H1 (cell line): ENCODE measurements at regions of chr1 and their contacts with region 1.

Region 1: DNA sequence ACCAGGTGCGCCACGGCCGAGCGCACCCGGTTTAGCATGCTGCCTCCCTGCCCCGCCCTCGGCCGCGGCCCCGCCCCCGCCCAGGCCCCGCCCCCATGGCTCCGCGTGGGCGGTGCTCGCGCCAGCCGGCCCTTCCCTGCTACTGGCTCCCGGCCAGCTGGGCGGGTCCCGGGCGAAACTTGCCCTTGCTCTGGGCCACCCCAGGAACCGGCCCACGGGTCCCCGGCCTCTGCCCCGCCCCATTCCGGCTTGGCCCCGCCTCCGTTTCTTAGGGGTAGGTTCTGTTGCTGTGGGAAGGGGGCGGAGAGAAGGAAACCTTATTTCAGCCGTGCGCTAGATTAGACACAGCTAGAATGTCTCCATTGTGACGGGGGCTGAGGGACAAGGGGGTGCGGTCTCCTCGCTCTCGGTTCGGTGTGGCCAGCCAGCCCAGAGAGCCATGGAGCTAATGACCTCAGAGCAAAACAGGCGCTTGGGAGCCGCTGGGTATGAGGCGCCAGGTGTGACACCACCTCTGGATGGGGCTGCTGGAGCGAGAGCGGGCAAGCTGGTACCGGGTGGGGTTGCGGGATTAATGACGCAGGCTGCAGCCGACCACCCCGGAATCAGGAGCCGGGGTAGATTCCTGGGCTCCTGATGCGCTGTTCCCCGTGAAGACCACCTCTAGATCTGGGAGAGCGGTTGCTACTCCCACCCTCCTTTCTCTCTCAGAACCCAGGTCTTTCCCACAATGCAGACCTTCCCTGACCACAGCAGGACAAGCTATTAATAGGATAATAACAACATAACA is at the start of gene PPM1J:
- DNase-seq: peak; percentile 85 to 100
- H3K4me3 ChIP-seq: peak within 1 kb of the TSS; percentile 60 to 81 (median 73)
- H3K27ac ChIP-seq: no peak within 1 kb of the TSS
- H3K4me1 ChIP-seq: peaks cover 0 to 20% (median 13%) of the 10 kb centered on the region in 4 experiments; a peak in 6 of 7 replicates
- H3K27me3 ChIP-seq: peaks cover 0 to 29% (median 16%) of the 10 kb centered on the region in 4 experiments; a peak in 5 of 7 replicates
- CTCF ChIP-seq: no peak
- EP300 ChIP-seq: no peak
- POLR2A ChIP-seq: no peak
- RAD21 ChIP-seq: no peak; a peak in 1 of 4 replicates
- total RNA-seq, gene PPM1J: 17.5 and 19.4 TPM in 2 replicates

Region 2: GRCh38 chr1:112546076-112546475 is 169.4 kb before region 1 on chr1:
- CTCF ChIA-PET with region 1: no interaction called
- POLR2A ChIA-PET with region 1: no interaction called
- DNase-seq: no peak
- H3K4me3 ChIP-seq: no peak overlapping the region
- H3K27ac ChIP-seq: no peak overlapping the region
- H3K4me1 ChIP-seq: no peaks in the 10 kb centered on the region
- H3K27me3 ChIP-seq: no peaks in the 10 kb centered on the region
- CTCF ChIP-seq: no peak
- EP300 ChIP-seq: no peak
- POLR2A ChIP-seq: no peak
- RAD21 ChIP-seq: no peak

Region 3: GRCh38 chr1:112643080-112643479 is 72.4 kb before region 1 on chr1:
- CTCF ChIA-PET with region 1: no interaction called
- POLR2A ChIA-PET with region 1: no interaction called
- DNase-seq: no peak
- H3K4me3 ChIP-seq: no peak overlapping the region
- H3K27ac ChIP-seq: no peak overlapping the region
- H3K4me1 ChIP-seq: no peaks in the 10 kb centered on the region
- H3K27me3 ChIP-seq: no peaks in the 10 kb centered on the region
- CTCF ChIP-seq: no peak
- EP300 ChIP-seq: no peak
- POLR2A ChIP-seq: no peak
- RAD21 ChIP-seq: no peak

Region 4: GRCh38 chr1:112674439-112674985 is 40.9 kb before region 1 on chr1 and contains the start of gene MOV10:
- CTCF ChIA-PET with region 1: interaction called, 5 read pairs
- POLR2A ChIA-PET with region 1: interaction called, 32 read pairs
- DNase-seq: peak; percentile 58 to 85
- H3K4me3 ChIP-seq: peak within 1 kb of the TSS; percentile 85 to 92 (median 90)
- H3K27ac ChIP-seq: peak within 1 kb of the TSS; percentile 74
- H3K4me1 ChIP-seq: peaks cover 2 to 14% (median 10%) of the 10 kb centered on the region in 4 experiments; a peak in 5 of 7 replicates
- H3K27me3 ChIP-seq: peaks cover 0 to 2% (median 0%) of the 10 kb centered on the region in 4 experiments; a peak in 2 of 7 replicates
- CTCF ChIP-seq: no peak
- EP300 ChIP-seq: peak in 1 of 2 experiments; percentile 36; a peak in 1 of 3 replicates
- POLR2A ChIP-seq: peak in 1 of 2 experiments; percentile 86; a peak in 2 of 3 replicates
- RAD21 ChIP-seq: peak in 1 of 2 experiments; percentile 14; a peak in 1 of 4 replicates
- total RNA-seq, gene MOV10: 105 and 109 TPM in 2 replicates

Region 5: GRCh38 chr1:112744009-112744578 is 28.6 kb after region 1 on chr1:
- CTCF ChIA-PET with region 1: interaction called, 73 read pairs
- POLR2A ChIA-PET with region 1: interaction called, 15 read pairs
- DNase-seq: peak in 1 of 2 experiments; percentile 86
- H3K4me3 ChIP-seq: peak overlapping the region; percentile 39 to 59 (median 50)
- H3K27ac ChIP-seq: no peak overlapping the region
- H3K4me1 ChIP-seq: peaks cover 0 to 7% (median 5%) of the 10 kb centered on the region in 4 experiments; a peak in 4 of 7 replicates
- H3K27me3 ChIP-seq: peaks cover 9 to 34% (median 27%) of the 10 kb centered on the region in 4 experiments
- CTCF ChIP-seq: peak; percentile 47 to 51 (median 51)
- EP300 ChIP-seq: no peak
- POLR2A ChIP-seq: no peak
- RAD21 ChIP-seq: peak; percentile 35 to 52; a peak in 2 of 4 replicates

Region 6: DNA sequence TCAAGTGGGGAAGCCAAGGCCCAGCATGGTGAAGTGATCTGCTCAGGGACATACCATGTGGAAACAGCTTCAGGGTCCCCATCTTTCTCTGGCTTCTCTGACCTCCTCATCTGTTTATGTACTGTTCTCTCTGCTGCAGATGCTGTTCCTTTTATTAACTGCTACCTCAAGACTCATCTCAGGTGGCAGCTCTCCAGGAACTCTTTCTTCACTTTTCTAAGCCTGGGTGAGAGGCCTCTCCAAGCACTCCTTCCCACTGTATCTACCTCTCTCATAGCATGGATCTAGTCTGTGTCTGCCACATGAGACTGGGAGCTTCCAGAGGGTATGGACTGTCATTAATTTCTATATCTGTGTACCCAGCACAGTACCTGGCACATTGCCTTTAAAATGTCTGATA is 73.1 kb after region 1 on chr1:
- CTCF ChIA-PET with region 1: interaction called, 22 read pairs
- POLR2A ChIA-PET with region 1: no interaction called
- DNase-seq: no peak
- H3K4me3 ChIP-seq: no peak overlapping the region
- H3K27ac ChIP-seq: no peak overlapping the region
- H3K4me1 ChIP-seq: peaks cover 0 to 6% (median 3%) of the 10 kb centered on the region in 4 experiments; a peak in 5 of 7 replicates
- H3K27me3 ChIP-seq: no peaks in the 10 kb centered on the region; a peak in 1 of 7 replicates
- CTCF ChIP-seq: no peak
- EP300 ChIP-seq: no peak
- POLR2A ChIP-seq: no peak
- RAD21 ChIP-seq: no peak

Region 7: GRCh38 chr1:112809253-112809684 is 93.8 kb after region 1 on chr1:
- CTCF ChIA-PET with region 1: interaction called, 547 read pairs
- POLR2A ChIA-PET with region 1: interaction called, 10 read pairs
- DNase-seq: peak in 1 of 2 experiments; percentile 96
- H3K4me3 ChIP-seq: no peak overlapping the region
- H3K27ac ChIP-seq: peak overlapping the region; percentile 4; the same call in 1 of the 2 replicates
- H3K4me1 ChIP-seq: peaks cover 5 to 13% (median 8%) of the 10 kb centered on the region in 4 experiments; a peak in 6 of 7 replicates
- H3K27me3 ChIP-seq: no peaks in the 10 kb centered on the region
- CTCF ChIP-seq: peak; percentile 87 to 96 (median 96)
- EP300 ChIP-seq: no peak
- POLR2A ChIP-seq: no peak
- RAD21 ChIP-seq: peak; percentile 93 to 96

Region 8: GRCh38 chr1:112904071-112904830 is 188.8 kb after region 1 on chr1:
- CTCF ChIA-PET with region 1: interaction called, 19 read pairs
- POLR2A ChIA-PET with region 1: interaction called, 4 read pairs
- DNase-seq: peak in 1 of 2 experiments; percentile 44
- H3K4me3 ChIP-seq: no peak overlapping the region
- H3K27ac ChIP-seq: no peak overlapping the region
- H3K4me1 ChIP-seq: peaks cover 2 to 19% (median 8%) of the 10 kb centered on the region in 4 experiments; a peak in 4 of 7 replicates
- H3K27me3 ChIP-seq: no peaks in the 10 kb centered on the region
- CTCF ChIP-seq: no peak
- EP300 ChIP-seq: no peak
- POLR2A ChIP-seq: no peak
- RAD21 ChIP-seq: no peak

Region 9: GRCh38 chr1:113133038-113133437 is 417.6 kb after region 1 on chr1:
- CTCF ChIA-PET with region 1: interaction called, 10 read pairs
- POLR2A ChIA-PET with region 1: no interaction called
- DNase-seq: no peak
- H3K4me3 ChIP-seq: no peak overlapping the region
- H3K27ac ChIP-seq: no peak overlapping the region
- H3K4me1 ChIP-seq: no peaks in the 10 kb centered on the region; a peak in 1 of 7 replicates
- H3K27me3 ChIP-seq: no peaks in the 10 kb centered on the region
- CTCF ChIP-seq: no peak
- EP300 ChIP-seq: no peak
- POLR2A ChIP-seq: no peak
- RAD21 ChIP-seq: no peak